ENCODE measurements at regions of chr4 and their contacts with region 1.

Region 1: DNA sequence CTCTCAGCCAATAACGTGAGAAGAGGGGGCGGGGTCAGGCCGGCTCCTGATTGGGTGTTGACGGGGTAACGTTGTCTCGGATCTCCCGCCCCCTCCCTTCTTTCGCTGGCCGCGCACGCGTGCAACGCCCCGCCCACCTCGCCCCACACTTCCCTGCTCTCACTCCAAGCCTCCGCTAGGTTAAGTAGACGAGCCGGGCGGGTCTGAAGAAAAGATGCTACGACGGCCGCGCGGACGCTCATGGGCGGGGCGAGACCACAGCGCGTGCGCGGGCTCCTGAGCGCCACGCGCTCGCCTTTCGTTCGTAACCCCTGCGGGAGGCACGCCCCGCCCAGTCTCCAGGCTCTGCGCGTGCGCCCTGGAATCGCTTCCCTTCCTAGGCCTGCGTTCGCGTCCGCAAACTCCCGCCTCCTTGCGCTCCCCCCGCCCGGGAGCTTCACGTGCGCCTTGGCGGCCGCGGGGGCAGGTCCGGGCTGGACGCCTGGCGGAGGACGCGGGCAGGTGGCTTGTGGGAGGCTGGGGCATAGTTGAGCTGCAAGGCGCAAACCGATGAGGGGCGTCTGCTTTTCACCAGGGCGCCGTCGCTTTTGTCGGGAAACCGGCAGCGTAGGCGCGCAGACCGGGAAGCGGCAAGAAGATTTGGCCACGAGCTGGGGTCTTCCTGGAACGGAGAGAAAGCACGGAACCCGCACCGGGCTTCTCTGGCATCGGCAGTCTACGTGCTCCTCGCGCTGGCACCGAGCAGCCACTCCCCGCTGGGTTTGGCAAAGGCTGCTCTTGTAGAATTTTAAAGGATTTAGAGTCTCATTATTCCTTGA is 467 bp upstream of the PGRMC2 start:
- DNase-seq: peak; percentile 99
- H3K4me3 ChIP-seq: peak overlapping the region; percentile 55 to 84 (median 62)
- H3K27ac ChIP-seq: peak overlapping the region; percentile 86
- H3K4me1 ChIP-seq: peaks cover 7% of the 10 kb centered on the region
- H3K27me3 ChIP-seq: no peaks in the 10 kb centered on the region
- CTCF ChIP-seq: peak in 1 of 2 donors; percentile 38

Region 2: DNA sequence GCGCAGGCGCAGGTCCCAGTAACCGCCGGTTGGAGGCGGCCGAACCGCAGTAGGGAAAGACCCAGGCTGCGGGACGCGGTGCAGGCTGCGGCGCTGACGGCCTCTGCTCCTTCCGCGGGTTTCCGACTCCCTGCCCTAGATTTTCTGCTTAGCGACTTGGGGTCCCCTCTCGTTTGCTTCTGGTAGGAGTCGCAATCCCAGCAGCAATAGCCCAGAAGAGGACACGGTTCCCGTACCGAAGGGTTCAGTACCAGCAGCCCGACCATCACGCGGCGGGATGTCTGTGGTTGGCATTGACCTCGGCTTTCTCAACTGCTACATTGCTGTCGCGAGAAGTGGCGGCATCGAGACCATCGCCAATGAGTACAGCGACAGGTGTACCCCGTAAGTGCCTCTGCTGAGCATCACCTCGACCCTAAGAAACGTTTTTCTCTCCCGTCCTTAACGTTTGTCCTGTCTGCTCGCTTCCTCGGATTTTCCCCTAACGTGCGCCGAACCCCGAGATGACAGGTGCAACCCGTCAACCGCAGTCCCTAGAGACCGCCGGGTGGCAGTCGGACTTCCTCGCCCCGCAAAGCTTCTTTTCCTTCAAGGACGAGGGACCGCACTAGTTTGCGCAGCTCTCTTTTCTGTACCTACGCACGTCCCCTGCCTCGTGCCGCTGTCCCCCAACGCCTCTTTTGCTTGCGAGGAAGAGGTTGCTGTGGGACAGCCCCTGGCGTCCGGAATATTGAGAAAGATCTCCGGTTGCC is 505.6 kb before region 1 on chr4 and contains the start of gene HSPA4L:
- CTCF ChIA-PET with region 1: no interaction called
- dilution Hi-C with region 1: no loop called
- in situ Hi-C with region 1: no loop called
- intact Hi-C with region 1: loop called (anchors 2 kb)
- DNase-seq: no peak
- H3K4me3 ChIP-seq: peak within 1 kb of the TSS; percentile 83 to 96 (median 85)
- H3K27ac ChIP-seq: peak within 1 kb of the TSS; percentile 100
- H3K4me1 ChIP-seq: peaks cover 9% of the 10 kb centered on the region
- H3K27me3 ChIP-seq: no peaks in the 10 kb centered on the region
- CTCF ChIP-seq: peak in 1 of 2 donors; percentile 35
- total RNA-seq, gene HSPA4L: 40.7 to 65.3 TPM

Region 3: GRCh38 chr4:128191115-128191781 is 96.8 kb before region 1 on chr4:
- CTCF ChIA-PET with region 1: no interaction called
- dilution Hi-C with region 1: no loop called
- in situ Hi-C with region 1: no loop called
- intact Hi-C with region 1: loop called (anchors 1 kb)
- DNase-seq: peak; percentile 55
- H3K4me3 ChIP-seq: no peak overlapping the region
- H3K27ac ChIP-seq: no peak overlapping the region
- H3K4me1 ChIP-seq: no peaks in the 10 kb centered on the region
- H3K27me3 ChIP-seq: no peaks in the 10 kb centered on the region
- CTCF ChIP-seq: peak; percentile 86 to 91

Region 4: GRCh38 chr4:128241425-128241913 is 46.6 kb before region 1 on chr4:
- CTCF ChIA-PET with region 1: interaction called, 4 read pairs
- dilution Hi-C with region 1: no loop called
- in situ Hi-C with region 1: no loop called
- intact Hi-C with region 1: loop called (anchors 2 kb)
- DNase-seq: peak; percentile 95
- H3K4me3 ChIP-seq: no peak overlapping the region
- H3K27ac ChIP-seq: peak overlapping the region; percentile 61
- H3K4me1 ChIP-seq: peaks cover 22% of the 10 kb centered on the region
- H3K27me3 ChIP-seq: no peaks in the 10 kb centered on the region
- CTCF ChIP-seq: no peak

Region 5: DNA sequence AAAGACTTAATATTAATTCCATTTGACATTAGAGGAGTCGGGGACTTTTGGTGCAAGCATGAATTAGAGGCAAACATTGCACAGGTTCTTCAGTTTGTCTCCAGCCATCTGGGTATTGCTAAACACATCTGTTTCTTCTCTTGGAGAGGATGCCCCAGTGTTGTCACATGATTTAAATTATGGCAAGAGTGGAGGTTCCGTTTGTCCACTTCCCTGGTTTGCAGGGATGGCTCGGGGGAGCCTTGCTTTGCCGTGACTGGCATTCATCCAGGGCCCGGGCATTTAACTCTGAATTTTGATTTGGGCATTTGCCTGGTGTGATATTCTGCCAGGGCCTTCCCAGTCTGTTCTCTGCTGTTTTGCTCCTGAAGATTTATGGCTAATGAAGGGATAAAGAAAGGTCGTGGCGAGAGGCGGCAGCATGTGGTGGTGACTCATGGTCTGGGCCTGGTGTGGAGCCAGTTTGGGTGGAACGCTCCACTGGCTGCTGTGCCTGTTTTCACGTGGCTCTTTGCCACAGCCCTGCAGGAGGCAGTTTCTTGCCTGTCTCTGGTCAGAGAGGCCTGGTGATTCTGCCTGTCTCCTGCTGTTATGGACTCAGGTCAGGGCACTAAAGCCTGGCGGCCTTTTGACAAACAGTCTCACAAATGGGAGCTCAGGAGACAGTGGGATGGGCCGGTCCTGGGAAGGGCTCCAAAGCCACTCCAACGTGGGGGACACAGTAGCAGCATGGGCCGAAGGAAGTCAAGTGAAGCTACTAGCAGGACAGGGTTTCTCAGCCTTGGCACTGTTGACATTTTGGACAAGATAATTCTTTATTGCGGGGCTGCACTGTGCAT is 98.9 kb after region 1 on chr4:
- CTCF ChIA-PET with region 1: no interaction called
- dilution Hi-C with region 1: no loop called
- in situ Hi-C with region 1: no loop called
- intact Hi-C with region 1: loop called (anchors 5 kb)
- DNase-seq: peak; percentile 83
- H3K4me3 ChIP-seq: no peak overlapping the region
- H3K27ac ChIP-seq: peak overlapping the region; percentile 51
- H3K4me1 ChIP-seq: peaks cover 37% of the 10 kb centered on the region
- H3K27me3 ChIP-seq: no peaks in the 10 kb centered on the region
- CTCF ChIP-seq: no peak

Region 6: DNA sequence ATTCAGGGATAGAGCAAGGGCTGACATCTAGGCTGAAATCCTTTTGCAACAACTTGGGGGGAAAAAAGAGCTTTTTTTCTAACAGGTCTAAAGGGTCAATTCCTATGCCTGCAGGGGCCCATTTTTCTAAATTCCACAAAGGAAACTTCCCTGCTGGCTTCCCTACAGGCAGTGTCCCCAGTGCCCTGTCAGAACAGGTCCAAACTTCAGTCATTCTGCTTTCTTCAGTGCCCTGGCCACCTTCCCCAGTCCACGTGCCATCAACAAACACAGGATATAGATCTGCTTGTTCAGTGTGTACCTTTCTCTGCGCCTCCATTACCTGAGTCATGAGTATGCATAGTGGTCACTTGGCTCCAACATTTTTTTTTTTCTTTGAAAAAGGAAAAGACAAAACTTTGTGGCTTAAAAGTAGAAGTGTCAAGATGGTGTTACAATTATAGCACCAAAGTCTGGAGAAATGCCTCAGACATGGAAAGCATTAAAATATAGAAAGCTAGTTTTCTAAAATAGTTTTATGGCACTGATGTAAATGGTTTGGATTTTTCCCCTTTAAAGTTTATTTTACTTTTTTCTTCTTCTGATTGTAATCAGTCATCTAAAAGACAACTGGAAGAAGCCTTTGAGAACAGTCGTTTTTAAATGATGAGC is 437.4 kb after region 1 on chr4:
- CTCF ChIA-PET with region 1: no interaction called
- dilution Hi-C with region 1: no loop called
- in situ Hi-C with region 1: no loop called
- intact Hi-C with region 1: no loop called
- DNase-seq: no peak
- H3K4me3 ChIP-seq: no peak overlapping the region
- H3K27ac ChIP-seq: no peak overlapping the region
- H3K4me1 ChIP-seq: no peaks in the 10 kb centered on the region
- H3K27me3 ChIP-seq: no peaks in the 10 kb centered on the region
- CTCF ChIP-seq: no peak

Measured in mammary epithelial cell (primary cell).